Calu3 (cell line): ENCODE measurements at regions of chr2 and their contacts with region 1.

Region 1: DNA sequence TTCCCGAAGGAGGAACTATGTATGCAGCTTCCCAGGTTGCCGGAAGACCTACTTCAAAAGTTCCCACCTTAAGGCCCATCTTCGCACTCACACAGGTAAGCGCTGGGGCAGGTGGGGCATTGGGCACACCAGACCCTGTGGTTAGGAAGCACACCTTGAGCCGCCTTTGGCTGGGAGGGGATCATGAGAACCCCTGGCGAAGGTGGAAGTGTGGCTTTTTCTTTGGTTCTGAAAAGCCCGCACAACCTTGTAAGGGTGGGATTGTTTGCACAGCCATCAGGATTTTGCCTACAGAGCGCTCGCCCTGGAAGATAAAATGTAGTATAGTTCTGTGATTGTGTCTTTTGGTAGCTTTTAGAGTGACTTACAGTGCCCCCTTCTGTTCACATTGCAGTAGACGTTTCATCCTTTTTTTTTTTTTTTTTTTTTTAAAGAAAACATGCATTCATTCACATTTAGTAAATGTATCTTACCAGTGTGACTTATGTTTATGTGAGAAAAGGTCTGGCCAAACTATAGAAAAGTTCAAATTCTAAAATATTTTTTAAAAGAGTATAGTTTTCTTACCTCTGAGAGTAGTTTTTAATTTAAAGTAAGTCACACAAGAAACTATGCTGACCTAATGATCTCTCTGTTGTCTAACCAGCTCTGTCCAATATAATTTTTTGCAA is 5.3 kb downstream of the KLF11 start:
- DNase-seq: no peak
- H3K4me3 Mint-ChIP-seq: no peak overlapping the region
- H3K27ac Mint-ChIP-seq: no peak overlapping the region
- H3K4me1 Mint-ChIP-seq: no peaks in the 10 kb centered on the region
- H3K27me3 Mint-ChIP-seq: no peaks in the 10 kb centered on the region
- CTCF ChIP-seq: no peak

Region 2: DNA sequence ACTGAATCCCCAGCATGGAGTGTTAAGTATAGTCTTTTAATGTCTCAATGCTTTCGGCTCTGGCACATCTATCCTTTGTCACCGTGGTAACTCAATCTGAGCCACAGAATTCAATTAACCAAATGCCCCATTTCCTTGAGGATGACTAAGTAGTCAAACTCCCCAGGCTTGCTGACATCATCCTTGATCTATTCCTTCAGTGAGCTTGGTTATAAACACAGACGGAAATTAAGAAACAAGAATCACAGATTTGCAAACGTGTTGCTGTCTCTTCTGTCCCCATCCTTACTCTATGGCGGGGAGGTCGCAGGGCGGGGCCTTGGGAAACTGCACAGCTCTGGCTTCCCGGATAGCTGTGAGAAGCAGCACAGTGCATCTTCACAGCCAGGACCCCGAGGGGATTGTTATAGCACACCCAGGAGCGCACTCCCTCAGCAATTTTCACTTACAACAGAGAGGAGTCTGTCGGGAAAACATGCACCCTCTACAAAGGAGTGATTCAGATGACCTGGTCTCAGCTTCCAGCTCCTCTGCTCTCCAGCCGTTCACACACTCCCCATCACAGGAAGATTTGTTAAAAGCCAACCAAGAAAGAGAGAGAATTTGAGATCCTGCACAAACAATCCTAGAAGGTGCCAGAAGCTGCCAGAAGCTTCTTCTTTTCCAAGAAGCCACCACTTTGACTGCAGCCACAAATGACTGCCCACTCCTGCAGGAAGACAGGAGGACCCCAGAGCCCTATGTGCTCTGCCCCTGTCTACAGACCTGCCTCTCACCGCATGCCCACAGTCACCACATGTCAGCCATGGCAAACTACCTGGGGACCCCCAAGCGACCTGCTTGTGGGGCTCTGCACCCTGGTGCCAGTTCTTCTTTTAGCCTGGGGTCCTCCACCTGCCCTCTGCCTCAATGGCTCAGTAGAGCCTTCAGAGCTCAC is 373.0 kb before region 1 on chr2:
- CTCF ChIA-PET with region 1: no interaction called
- intact Hi-C with region 1: no loop called
- DNase-seq: peak; percentile 19
- H3K4me3 Mint-ChIP-seq: peak overlapping the region; percentile 58
- H3K27ac Mint-ChIP-seq: peak overlapping the region; percentile 66
- H3K4me1 Mint-ChIP-seq: peaks cover 22% of the 10 kb centered on the region
- H3K27me3 Mint-ChIP-seq: no peaks in the 10 kb centered on the region
- CTCF ChIP-seq: no peak

Region 3: DNA sequence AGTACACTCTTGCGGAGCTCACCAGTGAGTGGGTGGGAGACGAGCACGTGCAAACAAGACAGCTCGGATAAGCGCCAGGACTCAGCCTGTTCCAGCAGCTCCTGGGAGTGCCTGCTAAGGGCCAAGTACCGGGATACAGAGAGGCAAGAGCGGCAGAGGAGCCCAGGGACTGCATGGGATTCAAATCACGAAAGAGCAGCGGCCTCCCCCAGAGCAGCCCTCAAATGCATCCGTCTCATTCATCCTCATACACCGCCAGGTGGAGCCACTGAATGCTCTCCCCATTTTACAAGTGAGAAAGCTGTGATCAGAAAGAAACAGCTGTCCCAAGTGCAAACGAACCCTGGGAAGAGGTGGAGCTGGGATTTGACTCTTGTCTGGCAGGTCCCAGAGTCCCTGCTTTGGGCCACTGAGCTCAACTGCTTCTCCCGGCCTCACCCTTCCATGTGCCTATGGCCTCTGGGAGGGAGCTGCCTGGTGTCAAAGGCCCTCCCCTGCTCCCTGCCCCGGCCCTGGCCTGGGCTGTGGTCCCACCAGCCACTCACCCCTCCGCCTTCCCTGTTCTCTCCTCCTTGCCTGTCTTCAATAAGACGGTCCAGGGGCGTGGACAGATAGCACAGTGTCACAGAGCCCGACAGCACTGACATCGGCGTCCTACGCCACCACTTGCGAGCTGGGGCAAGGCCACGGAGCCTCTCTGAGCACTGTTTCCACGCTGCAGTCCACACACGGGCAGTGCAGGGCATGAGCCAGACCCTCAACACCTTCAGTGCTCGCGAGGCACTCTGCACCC is 278.1 kb before region 1 on chr2:
- CTCF ChIA-PET with region 1: interaction called, 10 read pairs
- intact Hi-C with region 1: loop called (anchors 1 kb)
- DNase-seq: peak; percentile 65
- H3K4me3 Mint-ChIP-seq: no peak overlapping the region
- H3K27ac Mint-ChIP-seq: no peak overlapping the region
- H3K4me1 Mint-ChIP-seq: peaks cover 15% of the 10 kb centered on the region
- H3K27me3 Mint-ChIP-seq: peaks cover 15% of the 10 kb centered on the region
- CTCF ChIP-seq: peak; percentile 74

Region 4: GRCh38 chr2:9799665-9800632 is 248.7 kb before region 1 on chr2:
- CTCF ChIA-PET with region 1: interaction called, 11 read pairs
- intact Hi-C with region 1: loop called (anchors 1 kb)
- DNase-seq: peak; percentile 95
- H3K4me3 Mint-ChIP-seq: peak overlapping the region; percentile 50
- H3K27ac Mint-ChIP-seq: peak overlapping the region; percentile 85
- H3K4me1 Mint-ChIP-seq: peaks cover 49% of the 10 kb centered on the region
- H3K27me3 Mint-ChIP-seq: no peaks in the 10 kb centered on the region
- CTCF ChIP-seq: peak; percentile 93

Region 5: GRCh38 chr2:9813312-9814133 is 235.1 kb before region 1 on chr2:
- CTCF ChIA-PET with region 1: interaction called, 4 read pairs
- intact Hi-C with region 1: loop called (anchors 5 kb)
- DNase-seq: peak; percentile 83
- H3K4me3 Mint-ChIP-seq: no peak overlapping the region
- H3K27ac Mint-ChIP-seq: no peak overlapping the region
- H3K4me1 Mint-ChIP-seq: peaks cover 40% of the 10 kb centered on the region
- H3K27me3 Mint-ChIP-seq: no peaks in the 10 kb centered on the region
- CTCF ChIP-seq: peak; percentile 90

Region 6: DNA sequence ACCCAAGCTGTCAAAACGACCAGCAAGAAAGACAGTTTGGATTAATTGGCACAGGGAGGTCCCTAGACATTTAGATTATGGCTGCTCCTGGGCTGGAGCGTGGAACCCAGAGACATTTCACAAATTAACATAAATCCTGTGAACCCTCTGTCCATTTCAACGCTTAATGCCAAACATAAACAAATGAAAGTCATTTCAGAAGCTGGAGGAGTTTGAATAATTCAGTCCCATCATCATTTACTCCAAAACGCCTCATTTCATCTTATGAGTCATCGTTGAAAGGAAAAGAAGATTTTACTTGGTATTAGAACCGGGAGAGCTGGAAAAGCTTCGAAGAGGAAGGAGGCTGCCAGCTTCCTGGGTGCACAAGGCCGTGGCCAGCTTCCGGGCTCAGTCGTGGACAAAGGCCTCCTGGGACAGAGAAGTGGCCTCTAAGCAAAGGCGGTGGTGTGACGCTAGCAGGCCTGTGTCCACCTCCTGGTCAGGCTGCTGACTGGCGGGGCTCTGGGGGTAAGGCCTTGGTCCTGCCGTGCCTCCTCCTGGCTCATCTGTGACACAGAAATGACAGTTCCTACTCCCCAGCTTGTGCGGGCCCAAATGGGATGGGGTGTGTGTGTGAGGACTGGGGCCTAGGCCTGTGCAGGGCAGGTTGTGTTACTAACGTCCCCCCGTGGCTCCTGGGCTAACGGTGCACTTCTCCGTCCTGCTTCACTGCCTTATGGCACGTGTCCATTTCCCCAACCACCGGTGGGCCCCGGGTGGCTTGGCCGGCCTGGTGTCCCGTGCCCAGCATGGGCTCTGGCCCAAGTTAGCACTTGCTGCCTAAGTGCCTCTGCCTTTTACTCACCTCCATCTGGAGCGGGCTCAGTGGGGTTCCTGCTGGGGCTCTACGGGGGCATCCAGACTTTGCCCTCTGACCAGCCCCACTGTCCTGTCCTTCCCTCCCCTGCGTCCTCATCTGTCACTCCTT is 145.5 kb after region 1 on chr2:
- CTCF ChIA-PET with region 1: no interaction called
- intact Hi-C with region 1: no loop called
- DNase-seq: no peak
- H3K4me3 Mint-ChIP-seq: no peak overlapping the region
- H3K27ac Mint-ChIP-seq: no peak overlapping the region
- H3K4me1 Mint-ChIP-seq: no peaks in the 10 kb centered on the region
- H3K27me3 Mint-ChIP-seq: no peaks in the 10 kb centered on the region
- CTCF ChIP-seq: no peak

Region 7: GRCh38 chr2:10873790-10874437 is 825.3 kb after region 1 on chr2:
- CTCF ChIA-PET with region 1: no interaction called
- intact Hi-C with region 1: no loop called
- DNase-seq: no peak
- H3K4me3 Mint-ChIP-seq: no peak overlapping the region
- H3K27ac Mint-ChIP-seq: no peak overlapping the region
- H3K4me1 Mint-ChIP-seq: no peaks in the 10 kb centered on the region
- H3K27me3 Mint-ChIP-seq: peaks cover 55% of the 10 kb centered on the region
- CTCF ChIP-seq: no peak